K562 (cell line): ENCODE measurements at regions of chr6 and their contacts with region 1.

Region 1: GRCh38 chr6:16183187-16183664 is 54.3 kb downstream of the MYLIP start:
- DNase-seq: peak; percentile 58 to 70 (median 60)
- ATAC-seq: peak; percentile 75
- H3K4me3 ChIP-seq: no peak overlapping the region
- H3K27ac ChIP-seq: peak overlapping the region; percentile 28; the same call in 2 of the 3 replicates
- H3K4me1 ChIP-seq: peaks cover 0 to 8% of the 10 kb centered on the region in 2 experiments; a peak in 2 of 5 replicates
- H3K27me3 ChIP-seq: no peaks in the 10 kb centered on the region
- CTCF ChIP-seq: peak; percentile 68 to 90 (median 80); a peak in 5 of 6 replicates
- EP300 ChIP-seq: no peak; the same call in 1 of the 2 replicates
- POLR2A ChIP-seq: no peak
- RAD21 ChIP-seq: peak; percentile 86 to 89

Region 2: DNA sequence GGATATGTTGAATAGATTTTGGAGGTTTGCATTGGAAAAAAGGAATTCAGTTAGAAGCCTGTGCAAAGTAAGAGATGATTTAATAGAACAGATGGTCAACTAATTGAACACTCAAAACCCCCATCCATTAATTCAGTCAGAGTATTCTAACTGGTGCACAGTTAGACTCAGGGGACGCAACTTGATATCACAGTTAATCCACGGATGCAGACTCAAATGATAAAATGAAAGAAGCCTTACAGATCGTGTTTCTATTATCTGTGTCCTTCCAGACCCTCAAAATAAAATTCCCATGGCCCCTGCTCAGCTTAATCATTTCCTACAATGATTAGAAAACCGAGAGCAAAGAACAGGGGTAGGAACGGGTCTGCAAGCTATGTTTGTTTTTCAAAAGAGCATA is 475.0 kb before region 1 on chr6:
- CTCF ChIA-PET with region 1: no interaction called
- POLR2A ChIA-PET with region 1: no interaction called
- in situ Hi-C with region 1: no loop called
- intact Hi-C with region 1: no loop called
- DNase-seq: no peak
- ATAC-seq: no peak
- H3K4me3 ChIP-seq: no peak overlapping the region
- H3K27ac ChIP-seq: no peak overlapping the region
- H3K4me1 ChIP-seq: no peaks in the 10 kb centered on the region
- H3K27me3 ChIP-seq: no peaks in the 10 kb centered on the region
- CTCF ChIP-seq: no peak
- EP300 ChIP-seq: no peak
- POLR2A ChIP-seq: no peak
- RAD21 ChIP-seq: no peak

Region 3: GRCh38 chr6:16196958-16197576 is 13.8 kb after region 1 on chr6:
- CTCF ChIA-PET with region 1: interaction called, 3 read pairs
- POLR2A ChIA-PET with region 1: interaction called, 10 read pairs
- in situ Hi-C with region 1: no loop called
- intact Hi-C with region 1: no loop called
- DNase-seq: no peak
- ATAC-seq: no peak
- H3K4me3 ChIP-seq: no peak overlapping the region
- H3K27ac ChIP-seq: no peak overlapping the region
- H3K4me1 ChIP-seq: no peaks in the 10 kb centered on the region; a peak in 3 of 5 replicates
- H3K27me3 ChIP-seq: no peaks in the 10 kb centered on the region; a peak in 1 of 5 replicates
- CTCF ChIP-seq: no peak
- EP300 ChIP-seq: no peak
- POLR2A ChIP-seq: no peak
- RAD21 ChIP-seq: no peak

Region 4: GRCh38 chr6:16991981-16992629 is 808.9 kb after region 1 on chr6:
- CTCF ChIA-PET with region 1: no interaction called
- POLR2A ChIA-PET with region 1: no interaction called
- in situ Hi-C with region 1: no loop called
- intact Hi-C with region 1: no loop called
- DNase-seq: no peak
- ATAC-seq: no peak
- H3K4me3 ChIP-seq: no peak overlapping the region
- H3K27ac ChIP-seq: no peak overlapping the region
- H3K4me1 ChIP-seq: no peaks in the 10 kb centered on the region
- H3K27me3 ChIP-seq: peaks cover 0 to 4% of the 10 kb centered on the region in 2 experiments; a peak in 1 of 5 replicates
- CTCF ChIP-seq: no peak
- EP300 ChIP-seq: no peak
- POLR2A ChIP-seq: no peak
- RAD21 ChIP-seq: no peak